ENCODE measurements at regions of chr2 and their contacts with region 1.

Region 1: GRCh38 chr2:102872388-102872787 is 110.6 kb downstream of the TMEM182 start:
- DNase-seq: no peak

Region 2: GRCh38 chr2:102841107-102841840 is 31.1 kb before region 1 on chr2:
- CTCF ChIA-PET with region 1: interaction called, 29 read pairs
- POLR2A ChIA-PET with region 1: no interaction called
- DNase-seq: peak; percentile 66

Region 3: GRCh38 chr2:102891296-102891695 is 18.9 kb after region 1 on chr2:
- CTCF ChIA-PET with region 1: no interaction called
- POLR2A ChIA-PET with region 1: no interaction called
- DNase-seq: no peak

Measured in HEK293T (cell line).